Ovary (tissue), 10 donors: ENCODE measurements at regions of chr5 and their contacts with region 1.

Region 1: GRCh38 chr5:147369742-147370374 is 135.0 kb downstream of the STK32A start:
- DNase-seq: no peak
- H3K4me3 ChIP-seq: no peak overlapping the region
- H3K27ac ChIP-seq: no peak overlapping the region
- H3K4me1 ChIP-seq: peaks cover 3% of the 10 kb centered on the region
- H3K27me3 ChIP-seq: no peaks in the 10 kb centered on the region
- CTCF ChIP-seq: peak in 1 of 3 donors; percentile 32
- EP300 ChIP-seq: no peak
- POLR2A ChIP-seq: no peak

Region 2: DNA sequence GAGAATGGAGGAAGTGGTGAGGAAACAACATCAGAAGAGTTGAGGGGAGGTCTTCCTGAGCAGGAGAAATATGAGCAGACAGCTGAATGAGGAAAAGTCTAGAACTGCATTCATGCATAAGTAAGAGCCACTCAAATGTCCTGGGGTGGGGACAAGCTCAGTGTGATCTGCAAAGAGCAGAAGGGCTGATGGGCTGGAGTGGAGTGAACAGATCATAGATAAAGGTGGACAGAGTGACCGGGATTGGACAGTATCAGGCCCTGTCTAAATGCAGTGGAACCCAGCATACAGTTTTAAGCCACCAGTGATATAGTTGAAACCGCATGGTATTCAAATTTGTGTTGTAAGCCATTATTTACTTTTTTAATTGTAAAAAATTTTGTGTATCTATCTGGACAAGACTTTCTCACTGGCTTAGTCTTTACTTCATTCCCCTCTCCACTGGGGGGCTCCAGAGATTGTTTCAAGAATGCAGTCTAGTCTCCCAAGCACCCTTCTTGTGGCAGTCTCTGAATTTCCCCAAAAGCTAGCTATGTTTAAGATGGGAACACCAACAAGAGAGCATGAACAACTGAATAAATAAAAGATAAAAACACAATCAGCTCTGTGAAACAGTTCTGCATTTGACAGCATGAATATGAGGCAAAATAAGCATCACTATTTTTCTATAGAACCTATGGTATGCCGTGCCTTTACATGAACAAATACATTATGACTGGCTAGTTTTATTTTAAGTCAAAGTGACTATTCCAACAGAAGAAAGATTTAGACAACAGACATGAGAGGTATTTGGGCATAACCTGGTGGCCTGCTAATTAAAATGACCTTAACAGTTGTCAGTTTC is 145.7 kb before region 1 on chr5:
- intact Hi-C with region 1: loop called in 1 of 4 experiments (anchors 5 kb)
- DNase-seq: peak in 3 of 5 donors; percentile 21 to 63 (median 53)
- H3K4me3 ChIP-seq: no peak overlapping the region
- H3K27ac ChIP-seq: no peak overlapping the region
- H3K4me1 ChIP-seq: no peaks in the 10 kb centered on the region
- H3K27me3 ChIP-seq: no peaks in the 10 kb centered on the region
- CTCF ChIP-seq: peak; percentile 26 to 71 (median 58)
- EP300 ChIP-seq: no peak
- POLR2A ChIP-seq: no peak

Region 3: DNA sequence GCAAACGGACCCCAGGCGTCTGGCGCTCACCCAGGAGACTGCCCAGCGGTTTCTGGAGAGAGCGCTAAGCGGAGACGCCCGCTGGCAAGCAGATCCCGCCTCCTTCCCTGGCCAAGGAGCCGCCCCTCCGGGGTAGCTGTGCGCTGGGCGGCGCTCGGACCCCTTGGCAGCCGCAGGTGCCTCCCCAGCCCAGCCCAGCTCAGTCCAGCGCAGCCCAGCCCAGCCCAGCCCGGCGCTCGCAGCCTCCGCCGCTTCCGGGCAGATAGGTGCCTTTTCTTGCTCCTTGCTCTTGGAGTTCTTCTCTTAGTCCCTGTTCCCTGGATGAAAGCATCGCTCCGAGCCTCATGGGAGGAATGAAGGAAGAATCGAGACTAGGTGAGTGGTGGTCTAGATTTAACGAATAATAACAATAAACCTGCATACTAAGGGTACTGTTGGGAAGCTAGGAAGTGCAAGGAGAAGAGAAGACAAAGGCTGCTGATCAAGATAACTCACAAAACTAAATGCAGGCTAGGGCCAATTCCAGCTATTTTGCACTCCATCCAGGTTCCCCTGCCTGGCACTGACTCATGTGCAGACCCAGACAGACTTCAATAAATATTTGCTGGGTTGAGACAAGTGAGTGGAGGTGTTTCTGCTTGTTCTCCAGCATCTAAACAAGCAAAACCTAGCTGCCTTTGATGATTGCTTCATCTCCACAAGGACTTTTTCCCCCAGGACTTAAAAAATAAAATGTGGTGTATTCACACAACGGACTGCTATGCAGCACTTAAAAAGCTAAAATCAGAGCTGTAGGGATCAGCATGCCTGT is 134.8 kb before region 1 on chr5 and contains the start of gene STK32A:
- intact Hi-C with region 1: loop called in 2 of 4 experiments (anchors 10 kb)
- DNase-seq: peak; percentile 59 to 79 (median 77)
- H3K4me3 ChIP-seq: peak within 1 kb of the TSS; percentile 72
- H3K27ac ChIP-seq: peak within 1 kb of the TSS; percentile 81 to 88
- H3K4me1 ChIP-seq: peaks cover 4% of the 10 kb centered on the region
- H3K27me3 ChIP-seq: no peaks in the 10 kb centered on the region
- CTCF ChIP-seq: no peak
- EP300 ChIP-seq: no peak
- POLR2A ChIP-seq: no peak
- total RNA-seq, gene STK32A: 1.8 to 9.0 (median 6.4) TPM